HEK293 (cell line): ENCODE measurements at regions of chr22 and their contacts with region 1.

Region 1: DNA sequence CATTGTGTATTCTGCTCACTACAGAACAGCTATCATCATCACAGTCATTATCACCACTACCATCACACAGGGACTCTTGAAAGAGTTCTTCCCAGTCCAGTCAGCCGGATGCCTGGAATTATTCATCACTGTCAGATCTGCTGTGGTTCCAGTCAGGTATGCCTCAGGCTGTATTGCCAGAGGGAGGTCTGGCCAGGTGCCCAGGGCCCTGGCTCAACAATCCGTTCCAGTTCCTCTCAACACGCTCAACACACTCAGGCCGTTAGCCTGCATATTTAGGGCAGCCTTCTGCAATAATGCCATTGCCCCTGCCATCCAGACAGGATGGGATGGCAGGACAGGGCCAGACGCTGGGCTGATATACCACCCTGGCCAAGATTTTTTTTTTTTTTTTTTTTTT is 28.6 kb upstream of the RASL10A start:
- H3K4me3 ChIP-seq: no peak overlapping the region
- H3K27ac ChIP-seq: peak overlapping the region; percentile 60
- H3K4me1 ChIP-seq: peaks cover 15% of the 10 kb centered on the region
- CTCF ChIP-seq: no peak

Region 2: GRCh38 chr22:29369460-29369859 is 25.3 kb after region 1 on chr22:
- CTCF ChIA-PET with region 1: no interaction called
- POLR2A ChIA-PET with region 1: no interaction called
- H3K4me3 ChIP-seq: no peak overlapping the region
- H3K27ac ChIP-seq: no peak overlapping the region
- H3K4me1 ChIP-seq: no peaks in the 10 kb centered on the region
- CTCF ChIP-seq: no peak

Region 3: GRCh38 chr22:29387921-29388758 is 44.0 kb after region 1 on chr22 and contains the start of gene AP1B1:
- CTCF ChIA-PET with region 1: no interaction called
- POLR2A ChIA-PET with region 1: interaction called, 11 read pairs
- H3K4me3 ChIP-seq: peak within 1 kb of the TSS; percentile 93
- H3K27ac ChIP-seq: peak within 1 kb of the TSS; percentile 63
- H3K4me1 ChIP-seq: peaks cover 6% of the 10 kb centered on the region; the same call in 1 of the 2 replicates
- CTCF ChIP-seq: peak; percentile 66